Left cardiac atrium (tissue), 4 donors: ENCODE measurements at regions of chr5 and their contacts with region 1.

Region 1: DNA sequence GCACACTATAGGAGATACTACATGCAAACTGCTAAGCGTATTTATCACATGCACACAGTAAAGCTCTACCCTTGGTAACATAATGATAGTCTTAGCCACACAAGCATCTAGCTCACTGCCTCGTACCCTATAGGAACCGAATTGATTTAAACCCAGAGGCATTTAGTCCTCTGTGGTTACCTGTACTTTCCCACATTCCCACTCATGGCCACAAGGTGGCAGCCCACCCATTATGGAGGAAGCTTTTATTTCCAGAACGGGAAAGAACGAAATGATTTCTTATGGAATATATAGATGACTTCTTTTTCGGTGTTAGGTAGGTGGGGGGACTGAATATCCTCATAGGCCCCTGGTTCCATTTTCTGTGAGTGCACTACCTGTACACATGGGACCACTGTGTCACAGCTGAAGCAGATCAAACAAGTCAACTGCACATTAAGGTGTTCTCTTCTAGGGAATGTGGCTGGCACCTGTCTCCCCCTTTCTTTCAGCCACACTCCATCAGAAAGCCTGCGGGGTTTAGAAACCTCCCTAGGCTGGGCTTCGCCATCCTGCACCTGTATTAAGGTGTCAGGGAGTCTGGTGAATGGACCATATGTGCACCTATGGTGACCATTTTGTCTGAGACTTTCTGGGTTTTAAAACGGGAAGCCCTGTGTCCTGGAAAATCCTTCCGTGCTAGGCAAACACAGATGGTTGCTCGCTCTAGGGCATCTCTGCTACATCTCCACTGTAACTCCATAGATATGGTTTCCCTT is 313.2 kb downstream of the SLIT3 start:
- DNase-seq: peak; percentile 76
- ATAC-seq: peak; percentile 42 to 68

Region 2: GRCh38 chr5:169190849-169191248 is 203.1 kb after region 1 on chr5:
- intact Hi-C with region 1: loop called (anchors 5 to 10 kb)
- DNase-seq: no peak
- ATAC-seq: peak; percentile 71

Region 3: GRCh38 chr5:169197343-169197742 is 209.6 kb after region 1 on chr5:
- intact Hi-C with region 1: loop called (anchors 5 to 10 kb)
- DNase-seq: no peak
- ATAC-seq: peak in 1 of 2 donors; percentile 36

Region 4: GRCh38 chr5:169302491-169303118 is 314.9 kb after region 1 on chr5:
- intact Hi-C with region 1: loop called in 1 of 2 experiments (anchors 5 kb)
- DNase-seq: peak; percentile 75
- ATAC-seq: peak in 1 of 2 donors; percentile 28

Region 5: DNA sequence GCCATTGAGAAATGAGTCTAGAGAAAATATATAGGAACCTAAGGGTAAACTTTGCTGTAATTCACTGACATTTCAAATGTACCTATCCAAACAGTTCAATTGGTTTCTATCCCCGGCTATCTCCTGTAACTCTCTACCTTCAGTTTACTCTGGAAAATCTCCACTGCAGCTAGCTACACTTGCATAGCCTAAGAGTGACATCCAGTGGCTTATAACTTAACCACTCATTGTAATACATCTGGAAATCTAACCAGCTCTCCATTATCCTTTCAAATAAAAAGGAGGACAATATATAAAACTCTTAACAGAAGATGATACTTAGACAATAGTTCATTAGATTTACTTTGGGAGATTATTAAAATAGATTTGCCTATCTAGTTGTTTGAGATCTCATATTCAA is 560.6 kb after region 1 on chr5:
- intact Hi-C with region 1: loop called in 1 of 2 experiments (anchors 5 kb)
- DNase-seq: no peak
- ATAC-seq: peak; percentile 92 to 94